IMR-90 (cell line): ENCODE measurements at regions of chr4 and their contacts with region 1.

Region 1: DNA sequence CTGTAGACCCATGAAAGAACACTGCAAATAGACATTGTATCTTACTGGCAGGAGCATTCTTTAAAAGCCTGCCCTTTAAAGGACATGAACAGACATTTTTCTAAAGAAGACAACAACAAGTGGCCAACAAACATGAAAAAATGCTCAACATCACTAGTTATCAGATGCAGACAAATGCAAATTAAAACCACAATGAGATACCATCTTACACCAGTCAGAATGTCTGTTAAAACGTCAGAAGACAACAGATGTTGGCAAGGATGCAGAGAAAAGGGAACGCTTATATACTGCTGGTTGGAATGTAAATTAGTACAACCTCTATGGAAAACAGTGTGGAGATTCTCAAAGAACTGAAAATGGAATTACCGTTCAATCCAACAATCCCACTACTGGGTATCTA is 77.2 kb downstream of the ATP10D start:
- DNase-seq: no peak
- ATAC-seq: no peak
- H3K4me3 ChIP-seq: no peak overlapping the region
- H3K27ac ChIP-seq: no peak overlapping the region
- H3K4me1 ChIP-seq: peaks cover 2% of the 10 kb centered on the region; the same call in 1 of the 2 replicates
- H3K27me3 ChIP-seq: no peaks in the 10 kb centered on the region
- CTCF ChIP-seq: no peak
- POLR2A ChIP-seq: no peak
- RAD21 ChIP-seq: no peak

Region 2: DNA sequence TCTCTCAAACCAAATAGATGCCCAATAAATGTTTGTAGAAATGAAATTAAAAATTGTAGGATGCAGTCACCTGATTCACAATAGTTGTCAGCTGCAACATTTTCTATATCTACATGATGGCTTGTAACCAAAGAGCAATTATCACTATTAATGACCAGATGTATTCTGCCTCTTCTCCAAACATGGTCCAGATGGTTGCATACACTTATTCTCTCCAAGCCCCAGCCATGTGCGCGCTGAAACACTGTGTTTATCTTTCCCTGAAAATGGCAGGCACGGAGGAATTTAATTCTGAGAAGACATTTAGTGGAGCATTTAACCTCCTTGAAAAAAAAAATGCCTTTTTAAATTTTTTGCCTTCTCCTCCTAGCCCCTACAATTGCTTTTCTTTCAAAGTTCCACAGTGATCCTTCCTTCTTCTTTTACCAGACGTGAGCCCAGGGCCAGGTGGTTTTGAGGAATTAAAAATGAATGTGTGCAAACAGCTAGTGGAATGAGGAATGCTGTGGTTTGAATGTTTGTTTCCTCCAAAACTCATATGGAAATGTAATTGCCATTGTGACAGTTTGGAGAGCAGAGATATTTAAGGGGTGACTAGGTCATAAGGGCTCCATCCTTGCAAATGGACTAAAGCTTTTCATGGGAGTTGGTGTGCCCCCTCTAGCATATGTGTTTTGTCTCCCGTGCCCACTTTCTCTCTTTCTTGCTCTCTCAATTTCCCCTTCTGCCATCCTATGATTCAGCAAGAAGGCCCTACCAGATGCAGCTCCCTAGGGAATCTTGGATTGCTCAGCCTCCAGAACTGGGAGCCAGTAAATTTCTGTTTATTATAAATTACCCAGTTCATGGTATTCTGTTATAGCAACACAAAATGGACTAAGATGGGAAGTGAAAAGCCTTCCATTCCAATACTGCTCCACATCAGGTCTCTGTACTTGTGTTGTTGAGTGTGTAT is 394.9 kb before region 1 on chr4:
- CTCF ChIA-PET with region 1: no interaction called
- POLR2A ChIA-PET with region 1: no interaction called
- dilution Hi-C with region 1: no loop called
- in situ Hi-C with region 1: no loop called
- intact Hi-C with region 1: no loop called
- DNase-seq: no peak
- ATAC-seq: 0 out of 2 replicates have a peak, but pooled peaks have one; percentile 27
- H3K4me3 ChIP-seq: no peak overlapping the region
- H3K27ac ChIP-seq: no peak overlapping the region
- H3K4me1 ChIP-seq: no peaks in the 10 kb centered on the region
- H3K27me3 ChIP-seq: no peaks in the 10 kb centered on the region
- CTCF ChIP-seq: no peak
- POLR2A ChIP-seq: no peak
- RAD21 ChIP-seq: no peak

Region 3: DNA sequence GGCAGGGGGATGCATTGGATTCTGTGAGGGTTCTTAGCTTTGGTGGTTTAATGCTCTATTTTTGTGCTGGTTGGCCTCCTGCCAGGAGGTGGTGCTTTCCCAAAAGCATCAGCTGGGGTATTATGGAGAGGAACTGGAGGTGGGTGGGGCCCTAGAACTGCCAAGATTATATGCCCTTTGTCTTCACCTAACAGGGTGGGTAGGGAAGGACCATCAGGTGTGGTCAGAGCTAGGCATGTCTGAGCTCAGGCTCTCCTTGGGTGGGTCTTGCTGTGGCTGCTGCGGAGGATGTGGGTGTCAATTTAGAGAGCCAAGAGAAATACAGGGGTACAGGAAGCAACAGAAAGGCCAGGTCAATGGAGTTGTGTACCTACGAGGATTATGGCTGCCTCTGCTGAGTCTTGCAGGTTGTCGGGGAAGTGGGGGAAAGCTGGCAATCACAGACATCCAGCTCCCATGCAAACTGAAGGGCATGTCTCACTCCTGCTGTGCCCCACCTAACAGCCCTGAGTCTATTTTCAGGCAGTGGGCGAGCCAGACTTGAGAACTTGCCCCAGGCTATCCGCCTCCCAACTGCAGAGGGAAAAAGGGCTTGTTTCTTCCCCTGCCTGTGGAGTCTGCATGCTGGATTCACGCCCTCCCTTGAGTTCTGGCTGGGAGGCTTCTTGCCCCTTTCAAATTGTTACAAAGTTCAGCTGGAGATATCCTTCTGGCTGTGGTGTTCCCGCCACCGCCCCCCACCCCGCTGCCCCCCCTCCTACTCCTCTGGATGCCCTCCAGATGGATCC is 310.8 kb before region 1 on chr4:
- CTCF ChIA-PET with region 1: no interaction called
- POLR2A ChIA-PET with region 1: no interaction called
- dilution Hi-C with region 1: no loop called
- in situ Hi-C with region 1: no loop called
- intact Hi-C with region 1: no loop called
- DNase-seq: no peak
- ATAC-seq: no peak
- H3K4me3 ChIP-seq: no peak overlapping the region
- H3K27ac ChIP-seq: no peak overlapping the region
- H3K4me1 ChIP-seq: no peaks in the 10 kb centered on the region; the same call in 1 of the 2 replicates
- H3K27me3 ChIP-seq: no peaks in the 10 kb centered on the region
- CTCF ChIP-seq: no peak
- POLR2A ChIP-seq: no peak
- RAD21 ChIP-seq: no peak

Region 4: DNA sequence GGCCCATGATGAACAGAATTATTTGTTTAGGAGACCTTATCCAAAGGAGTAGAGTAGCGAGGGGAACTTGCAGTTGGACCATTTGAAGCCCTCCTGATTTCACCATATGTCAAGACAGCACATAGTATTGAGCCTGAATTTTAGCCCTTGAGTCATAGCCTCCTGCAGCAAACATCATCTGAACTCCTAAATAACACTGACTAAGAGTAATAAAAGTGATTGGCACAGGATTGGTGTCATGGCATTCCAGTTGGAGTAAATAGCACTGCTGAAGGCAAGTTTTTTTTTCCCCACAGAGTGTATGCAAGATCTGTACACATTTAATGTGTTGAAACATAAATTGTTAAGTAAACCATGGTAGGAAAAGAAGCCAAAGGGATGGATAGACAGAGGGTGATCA is 187.8 kb before region 1 on chr4:
- CTCF ChIA-PET with region 1: no interaction called
- POLR2A ChIA-PET with region 1: no interaction called
- dilution Hi-C with region 1: no loop called
- in situ Hi-C with region 1: no loop called
- intact Hi-C with region 1: no loop called
- DNase-seq: peak; percentile 74
- ATAC-seq: peak; percentile 72
- H3K4me3 ChIP-seq: no peak overlapping the region
- H3K27ac ChIP-seq: no peak overlapping the region
- H3K4me1 ChIP-seq: no peaks in the 10 kb centered on the region
- H3K27me3 ChIP-seq: no peaks in the 10 kb centered on the region
- CTCF ChIP-seq: no peak
- POLR2A ChIP-seq: no peak
- RAD21 ChIP-seq: no peak

Region 5: GRCh38 chr4:47463235-47463956 is 98.9 kb before region 1 on chr4 and contains the start of gene COMMD8:
- CTCF ChIA-PET with region 1: interaction called, 5 read pairs
- POLR2A ChIA-PET with region 1: no interaction called
- dilution Hi-C with region 1: no loop called
- in situ Hi-C with region 1: no loop called
- intact Hi-C with region 1: loop called (anchors 5 kb)
- DNase-seq: peak; percentile 95
- ATAC-seq: peak; percentile 97
- H3K4me3 ChIP-seq: peak within 1 kb of the TSS; percentile 58
- H3K27ac ChIP-seq: peak within 1 kb of the TSS; percentile 66
- H3K4me1 ChIP-seq: no peaks in the 10 kb centered on the region
- H3K27me3 ChIP-seq: no peaks in the 10 kb centered on the region
- CTCF ChIP-seq: peak; percentile 30
- POLR2A ChIP-seq: peak; percentile 39
- RAD21 ChIP-seq: peak; percentile 37
- total RNA-seq, gene COMMD8: 12.5 and 29.4 TPM in 2 replicates

Region 6: GRCh38 chr4:47485047-47485692 is 77.1 kb before region 1 on chr4 and contains the start of gene ATP10D:
- CTCF ChIA-PET with region 1: no interaction called
- POLR2A ChIA-PET with region 1: no interaction called
- dilution Hi-C with region 1: no loop called
- in situ Hi-C with region 1: no loop called
- intact Hi-C with region 1: loop called (anchors 1 kb)
- DNase-seq: peak; percentile 93
- ATAC-seq: peak; percentile 99
- H3K4me3 ChIP-seq: peak within 1 kb of the TSS; percentile 71
- H3K27ac ChIP-seq: peak within 1 kb of the TSS; percentile 87
- H3K4me1 ChIP-seq: peaks cover 5% of the 10 kb centered on the region
- H3K27me3 ChIP-seq: no peaks in the 10 kb centered on the region
- CTCF ChIP-seq: peak; percentile 23; the same call in 1 of the 2 replicates
- POLR2A ChIP-seq: peak; percentile 96
- RAD21 ChIP-seq: peak; percentile 21; the same call in 1 of the 2 replicates
- total RNA-seq, gene ATP10D: 90.3 and 135 TPM in 2 replicates

Region 7: GRCh38 chr4:47510506-47511143 is 51.7 kb before region 1 on chr4:
- CTCF ChIA-PET with region 1: interaction called, 4 read pairs
- POLR2A ChIA-PET with region 1: no interaction called
- dilution Hi-C with region 1: no loop called
- in situ Hi-C with region 1: no loop called
- intact Hi-C with region 1: loop called (anchors 10 kb)
- DNase-seq: peak; percentile 43
- ATAC-seq: peak; percentile 62
- H3K4me3 ChIP-seq: no peak overlapping the region
- H3K27ac ChIP-seq: no peak overlapping the region
- H3K4me1 ChIP-seq: peaks cover 10% of the 10 kb centered on the region; the same call in 1 of the 2 replicates
- H3K27me3 ChIP-seq: no peaks in the 10 kb centered on the region
- CTCF ChIP-seq: peak; percentile 41
- POLR2A ChIP-seq: no peak
- RAD21 ChIP-seq: peak; percentile 13; the same call in 1 of the 2 replicates